ENCODE measurements at regions of chr10 and their contacts with region 1.

Region 1: GRCh38 chr10:17910125-17910789 is 41.5 kb upstream of the SLC39A12 start:
- DNase-seq: peak; percentile 9
- H3K4me3 ChIP-seq: no peak overlapping the region
- CTCF ChIP-seq: peak; percentile 60

Region 2: GRCh38 chr10:18005781-18006456 is 95.7 kb after region 1 on chr10:
- CTCF ChIA-PET with region 1: no interaction called
- POLR2A ChIA-PET with region 1: no interaction called
- DNase-seq: no peak
- H3K4me3 ChIP-seq: no peak overlapping the region
- CTCF ChIP-seq: no peak

Region 3: DNA sequence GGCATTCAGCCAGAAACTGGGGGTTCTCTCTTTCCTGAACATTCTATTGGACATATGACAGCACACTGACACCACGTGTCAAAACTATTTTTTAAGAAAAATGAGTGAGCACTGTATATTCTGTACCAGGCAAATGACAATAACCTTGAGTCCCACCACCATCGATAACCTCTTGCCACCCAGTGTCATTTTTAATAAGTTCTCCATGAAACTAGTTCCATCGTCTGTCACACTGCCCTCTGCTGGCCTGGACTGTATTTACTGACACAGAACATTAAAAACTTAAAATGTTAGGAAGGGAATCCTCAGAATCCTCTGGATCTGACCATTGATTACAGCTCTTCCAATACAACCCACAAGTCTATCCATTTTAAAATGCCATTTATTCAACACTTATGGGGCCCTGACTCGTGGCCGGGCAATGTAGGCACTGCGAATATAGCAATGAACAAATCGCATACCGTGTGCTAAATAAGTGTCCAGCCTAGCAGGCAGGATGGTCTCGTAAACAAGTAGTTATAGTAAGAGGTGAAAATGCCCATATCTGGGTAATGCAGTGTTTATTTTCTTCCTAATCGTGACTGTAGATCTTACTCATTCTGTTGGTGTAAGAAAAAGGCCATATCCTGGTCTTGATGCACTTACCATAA is 194.1 kb after region 1 on chr10:
- CTCF ChIA-PET with region 1: interaction called, 19 read pairs
- POLR2A ChIA-PET with region 1: no interaction called
- DNase-seq: no peak
- H3K4me3 ChIP-seq: no peak overlapping the region
- CTCF ChIP-seq: peak; percentile 55

Region 4: DNA sequence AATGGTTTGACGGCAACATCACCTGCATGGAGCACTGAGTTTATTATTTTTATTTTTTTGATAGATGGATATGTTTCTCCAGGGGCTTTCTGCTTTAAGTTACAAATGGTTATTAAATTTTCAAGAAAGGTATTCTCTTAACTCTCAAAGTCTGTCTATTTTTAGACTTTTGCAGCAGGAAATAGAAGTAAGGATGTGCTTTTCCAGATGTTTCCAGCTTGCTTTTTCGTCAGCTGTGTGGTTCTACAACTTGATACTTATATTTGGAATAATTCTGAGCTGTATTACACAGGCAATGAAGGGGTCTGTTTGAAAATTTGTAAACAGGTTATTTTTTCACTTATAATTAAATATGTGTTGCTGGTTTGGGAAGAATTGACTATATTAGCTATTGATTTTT is 299.0 kb after region 1 on chr10:
- CTCF ChIA-PET with region 1: interaction called, 10 read pairs
- POLR2A ChIA-PET with region 1: no interaction called
- DNase-seq: no peak
- H3K4me3 ChIP-seq: no peak overlapping the region
- CTCF ChIP-seq: no peak

Region 5: GRCh38 chr10:18378766-18379165 is 468.5 kb after region 1 on chr10:
- CTCF ChIA-PET with region 1: no interaction called
- POLR2A ChIA-PET with region 1: no interaction called
- DNase-seq: no peak
- H3K4me3 ChIP-seq: no peak overlapping the region
- CTCF ChIP-seq: no peak

Measured in AG04449 (cell line).